ENCODE measurements at regions of chr3 and their contacts with region 1.

Region 1: GRCh38 chr3:193572426-193572908 is 17.8 kb upstream of the ATP13A4 start:
- DNase-seq: peak; percentile 68 to 78
- H3K4me3 ChIP-seq: no peak overlapping the region
- H3K4me3 Mint-ChIP-seq: no peak overlapping the region
- H3K27ac Mint-ChIP-seq: no peak overlapping the region
- H3K4me1 ChIP-seq: no peaks in the 10 kb centered on the region
- H3K4me1 Mint-ChIP-seq: no peaks in the 10 kb centered on the region
- H3K27me3 ChIP-seq: no peaks in the 10 kb centered on the region
- H3K27me3 Mint-ChIP-seq: peaks cover 5% of the 10 kb centered on the region
- CTCF ChIP-seq: peak; percentile 77 to 82

Region 2: GRCh38 chr3:193040836-193041672 is 531.4 kb before region 1 on chr3:
- CTCF ChIA-PET with region 1: no interaction called
- POLR2A ChIA-PET with region 1: no interaction called
- intact Hi-C with region 1: loop called (anchors 2 kb)
- DNase-seq: peak in 1 of 2 experiments; percentile 63
- H3K4me3 ChIP-seq: no peak overlapping the region
- H3K4me3 Mint-ChIP-seq: no peak overlapping the region
- H3K27ac Mint-ChIP-seq: no peak overlapping the region
- H3K4me1 ChIP-seq: peaks cover 3% of the 10 kb centered on the region
- H3K4me1 Mint-ChIP-seq: peaks cover under 1% of the 10 kb centered on the region
- H3K27me3 ChIP-seq: no peaks in the 10 kb centered on the region
- H3K27me3 Mint-ChIP-seq: no peaks in the 10 kb centered on the region
- CTCF ChIP-seq: peak; percentile 47 to 49

Region 3: GRCh38 chr3:193134844-193135243 is 437.6 kb before region 1 on chr3:
- CTCF ChIA-PET with region 1: no interaction called
- POLR2A ChIA-PET with region 1: no interaction called
- intact Hi-C with region 1: no loop called
- DNase-seq: no peak
- H3K4me3 ChIP-seq: no peak overlapping the region
- H3K4me3 Mint-ChIP-seq: no peak overlapping the region
- H3K27ac Mint-ChIP-seq: no peak overlapping the region
- H3K4me1 ChIP-seq: no peaks in the 10 kb centered on the region
- H3K4me1 Mint-ChIP-seq: no peaks in the 10 kb centered on the region
- H3K27me3 ChIP-seq: no peaks in the 10 kb centered on the region
- H3K27me3 Mint-ChIP-seq: peaks cover 16% of the 10 kb centered on the region
- CTCF ChIP-seq: no peak

Region 4: DNA sequence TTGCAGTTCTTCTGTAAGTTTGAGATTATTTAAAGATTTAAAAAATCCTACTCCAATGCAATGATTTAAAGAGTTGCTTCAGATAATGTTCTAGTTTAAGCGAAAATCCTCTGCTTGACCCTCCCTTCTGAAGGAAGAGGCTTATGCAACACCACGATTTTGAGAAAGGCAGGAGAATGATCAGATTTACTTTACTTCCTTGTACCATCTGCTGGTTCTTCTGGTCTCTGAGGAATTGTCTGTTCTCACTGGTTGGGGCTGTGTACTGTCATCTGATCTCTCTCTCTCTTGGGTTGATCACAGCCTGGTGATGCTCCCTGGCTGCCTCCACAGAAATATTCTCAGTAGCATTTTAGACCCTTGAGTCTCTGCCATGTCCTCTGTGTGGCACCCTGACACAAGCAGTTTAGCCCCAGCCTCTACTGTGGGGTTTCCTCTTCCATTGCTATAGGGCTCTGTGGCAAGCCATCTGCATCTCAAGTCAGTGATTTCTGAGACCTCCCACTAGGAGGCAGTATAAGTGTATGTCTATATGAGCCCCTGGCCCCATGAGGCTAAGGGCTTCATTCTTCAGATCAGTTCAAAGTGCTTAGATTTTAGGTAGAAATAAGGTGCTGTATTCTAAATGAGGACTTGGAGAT is 382.2 kb before region 1 on chr3:
- CTCF ChIA-PET with region 1: no interaction called
- POLR2A ChIA-PET with region 1: no interaction called
- intact Hi-C with region 1: loop called (anchors 1 kb)
- DNase-seq: peak in 1 of 2 experiments; percentile 29
- H3K4me3 ChIP-seq: no peak overlapping the region
- H3K4me3 Mint-ChIP-seq: no peak overlapping the region
- H3K27ac Mint-ChIP-seq: no peak overlapping the region
- H3K4me1 ChIP-seq: no peaks in the 10 kb centered on the region
- H3K4me1 Mint-ChIP-seq: no peaks in the 10 kb centered on the region
- H3K27me3 ChIP-seq: no peaks in the 10 kb centered on the region; the same call in 1 of the 2 replicates
- H3K27me3 Mint-ChIP-seq: peaks cover 28% of the 10 kb centered on the region
- CTCF ChIP-seq: peak; percentile 38 to 45

Region 5: GRCh38 chr3:193262709-193263108 is 309.8 kb before region 1 on chr3:
- CTCF ChIA-PET with region 1: no interaction called
- POLR2A ChIA-PET with region 1: no interaction called
- intact Hi-C with region 1: loop called (anchors 1 kb)
- DNase-seq: peak in 1 of 2 experiments; percentile 6
- H3K4me3 ChIP-seq: no peak overlapping the region
- H3K4me3 Mint-ChIP-seq: no peak overlapping the region
- H3K27ac Mint-ChIP-seq: no peak overlapping the region
- H3K4me1 ChIP-seq: no peaks in the 10 kb centered on the region
- H3K4me1 Mint-ChIP-seq: no peaks in the 10 kb centered on the region
- H3K27me3 ChIP-seq: no peaks in the 10 kb centered on the region
- H3K27me3 Mint-ChIP-seq: peaks cover 13% of the 10 kb centered on the region
- CTCF ChIP-seq: peak in 1 of 2 experiments; percentile 42

Region 6: GRCh38 chr3:193439423-193439822 is 133.0 kb before region 1 on chr3:
- CTCF ChIA-PET with region 1: no interaction called
- POLR2A ChIA-PET with region 1: no interaction called
- intact Hi-C with region 1: no loop called
- DNase-seq: no peak
- H3K4me3 ChIP-seq: no peak overlapping the region
- H3K4me3 Mint-ChIP-seq: no peak overlapping the region
- H3K27ac Mint-ChIP-seq: no peak overlapping the region
- H3K4me1 ChIP-seq: no peaks in the 10 kb centered on the region
- H3K4me1 Mint-ChIP-seq: no peaks in the 10 kb centered on the region
- H3K27me3 ChIP-seq: no peaks in the 10 kb centered on the region
- H3K27me3 Mint-ChIP-seq: no peaks in the 10 kb centered on the region
- CTCF ChIP-seq: no peak

Region 7: GRCh38 chr3:193465992-193466608 is 106.4 kb before region 1 on chr3:
- CTCF ChIA-PET with region 1: interaction called, 3 read pairs
- POLR2A ChIA-PET with region 1: no interaction called
- intact Hi-C with region 1: loop called (anchors 1 kb)
- DNase-seq: no peak
- H3K4me3 ChIP-seq: no peak overlapping the region
- H3K4me3 Mint-ChIP-seq: no peak overlapping the region
- H3K27ac Mint-ChIP-seq: no peak overlapping the region
- H3K4me1 ChIP-seq: no peaks in the 10 kb centered on the region
- H3K4me1 Mint-ChIP-seq: peaks cover 6% of the 10 kb centered on the region
- H3K27me3 ChIP-seq: no peaks in the 10 kb centered on the region
- H3K27me3 Mint-ChIP-seq: peaks cover 5% of the 10 kb centered on the region
- CTCF ChIP-seq: no peak

Region 8: GRCh38 chr3:193522473-193522872 is 50.0 kb before region 1 on chr3:
- CTCF ChIA-PET with region 1: no interaction called
- POLR2A ChIA-PET with region 1: no interaction called
- intact Hi-C with region 1: no loop called
- DNase-seq: no peak
- H3K4me3 ChIP-seq: no peak overlapping the region
- H3K4me3 Mint-ChIP-seq: no peak overlapping the region
- H3K27ac Mint-ChIP-seq: no peak overlapping the region
- H3K4me1 ChIP-seq: peaks cover 5% of the 10 kb centered on the region
- H3K4me1 Mint-ChIP-seq: peaks cover 6% of the 10 kb centered on the region
- H3K27me3 ChIP-seq: no peaks in the 10 kb centered on the region
- H3K27me3 Mint-ChIP-seq: no peaks in the 10 kb centered on the region
- CTCF ChIP-seq: no peak

Region 9: GRCh38 chr3:193768070-193768394 is 195.6 kb after region 1 on chr3:
- CTCF ChIA-PET with region 1: no interaction called
- POLR2A ChIA-PET with region 1: no interaction called
- intact Hi-C with region 1: no loop called
- DNase-seq: no peak
- H3K4me3 ChIP-seq: no peak overlapping the region
- H3K4me3 Mint-ChIP-seq: no peak overlapping the region
- H3K27ac Mint-ChIP-seq: no peak overlapping the region
- H3K4me1 ChIP-seq: no peaks in the 10 kb centered on the region
- H3K4me1 Mint-ChIP-seq: no peaks in the 10 kb centered on the region
- H3K27me3 ChIP-seq: no peaks in the 10 kb centered on the region
- H3K27me3 Mint-ChIP-seq: no peaks in the 10 kb centered on the region
- CTCF ChIP-seq: no peak

Measured in Caco-2 (cell line).